Heart left ventricle (tissue), 16 donors: ENCODE measurements at regions of chr3 and their contacts with region 1.

Region 1: GRCh38 chr3:187714404-187714979 is 12.1 kb upstream of the RTP2 start:
- DNase-seq: peak in 4 of 5 donors; percentile 59 to 63 (median 62)
- ATAC-seq: peak; percentile 70 to 90 (median 90)
- H3K4me3 ChIP-seq: no peak overlapping the region
- H3K27ac ChIP-seq: peak overlapping the region in 1 of 12 donors; percentile 3
- H3K4me1 ChIP-seq: peaks cover 0 to 9% (median 0%) of the 10 kb centered on the region in 12 donors
- H3K27me3 ChIP-seq: no peaks in the 10 kb centered on the region
- CTCF ChIP-seq: peak; percentile 87 to 97 (median 92)
- POLR2A ChIP-seq: no peak

Region 2: GRCh38 chr3:187227658-187228258 is 486.7 kb before region 1 on chr3:
- intact Hi-C with region 1: loop called in 4 of 10 experiments (anchors 10 kb)
- DNase-seq: no peak
- ATAC-seq: no peak
- H3K4me3 ChIP-seq: no peak overlapping the region
- H3K27ac ChIP-seq: no peak overlapping the region
- H3K4me1 ChIP-seq: no peaks in the 10 kb centered on the region
- H3K27me3 ChIP-seq: no peaks in the 10 kb centered on the region
- CTCF ChIP-seq: no peak
- POLR2A ChIP-seq: no peak

Region 3: DNA sequence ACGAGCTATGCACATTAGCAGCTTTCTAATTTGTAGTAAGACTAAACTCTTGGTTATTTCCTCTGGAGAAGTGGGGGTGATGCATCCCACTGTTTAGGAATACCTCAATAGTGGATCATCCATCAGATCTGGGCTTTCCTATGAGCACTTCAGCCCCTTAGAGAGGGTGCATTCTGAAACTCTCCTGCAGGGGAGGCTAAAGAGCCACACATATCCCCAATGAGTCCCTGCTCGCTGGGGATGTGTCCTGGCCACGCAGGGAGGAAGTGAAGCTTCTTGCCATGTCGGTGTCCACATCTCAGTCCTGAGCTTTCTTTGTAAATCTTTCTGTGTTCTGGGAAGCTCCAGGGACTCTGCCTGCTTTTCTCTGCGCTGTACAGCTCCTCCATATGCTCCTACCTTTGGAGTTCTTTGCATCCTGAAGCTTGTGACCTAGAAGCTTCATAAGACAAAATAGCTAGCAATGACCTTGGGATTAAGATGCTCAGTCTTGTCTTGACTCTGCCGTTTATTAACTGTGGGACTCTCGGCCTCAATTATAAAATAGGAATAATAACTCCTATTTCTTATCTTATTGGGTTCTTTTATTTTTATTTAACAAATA is 394.7 kb before region 1 on chr3:
- intact Hi-C with region 1: loop called (anchors 1 to 10 kb)
- DNase-seq: peak; percentile 62 to 75 (median 72)
- ATAC-seq: peak; percentile 85 to 96 (median 94)
- H3K4me3 ChIP-seq: peak overlapping the region in 4 of 12 donors; percentile 34 to 48 (median 41)
- H3K27ac ChIP-seq: peak overlapping the region in 4 of 12 donors; percentile 7 to 49 (median 40)
- H3K4me1 ChIP-seq: peaks cover 0 to 16% (median 10%) of the 10 kb centered on the region in 12 donors
- H3K27me3 ChIP-seq: peaks cover 0 to 9% (median 0%) of the 10 kb centered on the region in 9 donors
- CTCF ChIP-seq: peak; percentile 80 to 97 (median 92)
- POLR2A ChIP-seq: no peak

Region 4: DNA sequence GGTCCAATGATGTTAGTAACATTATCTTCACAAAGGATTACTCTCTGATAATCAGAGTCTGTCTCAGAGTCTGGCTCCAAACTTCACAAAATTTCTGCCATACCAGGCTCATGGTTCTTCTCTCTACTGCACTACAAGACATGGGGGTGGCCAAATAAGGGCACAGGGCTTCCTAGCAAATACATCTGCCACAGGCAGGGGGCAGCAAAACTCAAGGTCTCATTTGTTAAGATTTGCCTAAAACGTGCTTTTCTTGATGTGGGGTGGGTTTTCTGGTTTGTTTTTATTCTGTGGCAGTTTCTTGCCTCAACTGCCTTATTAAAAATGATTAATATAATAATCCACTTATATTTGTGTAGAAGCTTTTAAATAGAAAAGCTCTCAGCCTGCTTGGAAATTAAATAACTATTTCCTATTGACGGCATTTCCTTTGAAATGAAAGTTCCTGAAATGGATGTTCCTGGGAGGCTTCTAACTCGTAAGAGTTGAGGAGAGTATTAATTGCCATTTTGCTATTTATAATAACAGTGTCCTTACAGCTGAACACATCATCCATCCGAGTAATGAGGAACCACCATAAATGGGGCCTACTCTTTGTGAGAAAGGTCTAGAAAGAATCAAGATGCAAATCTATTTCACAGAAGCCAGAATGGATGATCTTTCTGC is 98.1 kb before region 1 on chr3:
- intact Hi-C with region 1: loop called in 3 of 10 experiments (anchors 2 to 5 kb)
- DNase-seq: peak in 2 of 5 donors; percentile 14 to 32
- ATAC-seq: peak in 1 of 4 donors; percentile 54
- H3K4me3 ChIP-seq: no peak overlapping the region
- H3K27ac ChIP-seq: no peak overlapping the region
- H3K4me1 ChIP-seq: peaks cover 0 to 10% (median 0%) of the 10 kb centered on the region in 12 donors
- H3K27me3 ChIP-seq: no peaks in the 10 kb centered on the region
- CTCF ChIP-seq: peak; percentile 46 to 70 (median 62)
- POLR2A ChIP-seq: no peak